ENCODE measurements at regions of chr2 and their contacts with region 1.

Region 1: DNA sequence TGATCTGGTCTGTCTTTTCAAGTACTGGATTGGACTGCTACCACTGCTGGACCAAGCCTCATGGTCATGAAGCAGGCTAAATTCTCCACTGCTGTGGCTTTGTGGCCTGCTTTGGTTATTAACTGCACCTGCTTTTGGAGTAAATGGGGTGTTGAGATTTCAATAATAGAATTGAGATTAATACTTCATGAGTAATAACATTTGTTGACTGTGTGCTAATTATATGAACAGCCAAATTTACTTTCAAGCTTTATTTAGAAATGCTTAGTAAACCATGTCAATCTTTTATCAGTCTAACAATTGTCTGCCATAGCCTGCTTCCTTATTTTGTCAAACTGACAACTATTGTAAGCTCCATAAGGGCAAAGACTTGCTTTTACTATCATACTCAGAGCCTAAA is 27.4 kb upstream of the MTIF2 start:
- DNase-seq: no peak
- CTCF ChIP-seq: no peak

Region 2: DNA sequence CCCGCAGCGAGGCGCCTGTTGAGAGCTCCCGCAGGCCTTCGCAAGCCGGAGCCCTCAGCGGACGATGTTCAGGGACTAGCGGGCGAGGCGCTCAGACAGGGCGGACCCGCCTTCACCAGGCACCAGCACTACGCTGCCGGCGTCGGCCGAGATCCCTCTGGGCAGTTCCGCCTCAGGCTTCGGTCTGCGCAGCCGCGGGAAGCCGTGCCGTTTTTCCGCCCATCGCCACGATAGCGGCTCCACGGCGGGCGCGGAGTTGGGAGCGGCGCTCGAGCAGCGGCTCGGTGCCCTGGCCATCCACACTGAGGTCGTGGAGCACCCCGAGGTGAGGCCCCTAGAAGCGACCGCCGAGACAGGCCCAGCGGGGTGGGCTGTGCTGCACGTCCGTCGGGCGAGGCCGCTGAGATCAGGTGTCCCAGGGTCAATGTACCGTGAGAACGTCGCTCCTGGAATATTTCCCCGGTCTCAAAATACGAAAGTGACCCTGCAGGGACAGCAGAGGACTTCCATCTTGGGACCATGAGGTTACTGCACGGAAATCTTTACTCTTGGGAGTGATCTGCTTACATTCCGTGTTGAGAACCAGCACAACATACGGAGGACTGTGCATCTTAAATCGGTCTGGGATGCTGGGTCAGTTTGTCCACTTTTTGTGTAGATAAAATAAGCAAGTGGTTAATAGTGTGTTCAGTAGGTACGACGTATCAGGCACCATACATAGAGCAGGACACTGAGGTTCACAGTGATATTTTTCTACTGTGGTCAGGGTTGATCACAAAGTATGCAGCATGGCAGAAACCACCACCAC is 14.1 kb before region 1 on chr2:
- CTCF ChIA-PET with region 1: interaction called, 16 read pairs
- POLR2A ChIA-PET with region 1: no interaction called
- DNase-seq: peak; percentile 90
- CTCF ChIP-seq: no peak

Measured in GM10248 (cell line).